Pancreas (tissue), 10 donors: ENCODE measurements at regions of chr1 and their contacts with region 1.

Region 1: DNA sequence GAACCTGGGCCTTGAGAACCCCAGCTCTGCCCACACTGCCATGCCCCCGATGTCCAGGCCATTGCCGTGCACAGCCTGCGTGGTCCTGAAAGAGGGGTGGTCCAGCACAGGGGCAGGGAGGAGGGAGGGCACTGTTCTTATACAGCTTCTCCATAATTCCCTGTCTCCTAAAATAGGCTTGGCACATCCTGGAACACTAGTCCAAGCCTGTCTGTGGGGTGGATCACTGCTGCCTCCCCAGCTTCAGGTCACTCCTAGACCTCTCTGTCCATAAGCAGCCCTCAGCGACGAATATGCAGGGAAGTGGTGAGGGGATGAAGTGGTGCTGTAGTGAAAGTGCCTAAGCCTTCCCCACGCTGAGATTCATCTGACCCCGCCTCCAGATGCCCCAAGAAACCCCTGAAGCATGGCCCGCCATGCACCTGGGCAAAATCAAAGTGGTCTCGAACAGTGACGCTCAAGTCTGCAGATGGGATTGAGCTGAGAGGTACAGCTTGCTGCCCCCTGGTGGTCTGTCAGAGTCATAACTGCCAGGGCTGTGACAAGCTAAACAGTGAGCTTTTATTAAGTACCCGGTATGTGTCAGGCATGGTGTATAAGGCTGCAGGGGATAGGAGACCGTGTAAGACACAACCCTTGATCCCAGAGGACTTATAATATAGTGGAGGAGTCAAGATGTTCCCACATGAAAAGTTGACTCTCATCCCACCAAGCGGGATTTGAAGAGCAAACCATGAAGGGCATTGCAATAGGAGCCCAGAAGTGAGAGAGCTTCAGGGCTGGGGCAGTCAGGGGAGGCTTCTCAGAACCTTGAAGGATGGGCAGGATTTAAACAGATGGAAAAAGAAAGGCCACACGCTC is 66.6 kb downstream of the FAM163A start:
- DNase-seq: peak in 5 of 6 donors; percentile 19 to 72 (median 54)
- ATAC-seq: peak; percentile 44 to 82 (median 78)
- H3K4me3 ChIP-seq: no peak overlapping the region
- H3K27ac ChIP-seq: no peak overlapping the region
- H3K4me1 ChIP-seq: no peaks in the 10 kb centered on the region
- H3K27me3 ChIP-seq: no peaks in the 10 kb centered on the region
- CTCF ChIP-seq: peak; percentile 69 to 88 (median 78)

Region 2: DNA sequence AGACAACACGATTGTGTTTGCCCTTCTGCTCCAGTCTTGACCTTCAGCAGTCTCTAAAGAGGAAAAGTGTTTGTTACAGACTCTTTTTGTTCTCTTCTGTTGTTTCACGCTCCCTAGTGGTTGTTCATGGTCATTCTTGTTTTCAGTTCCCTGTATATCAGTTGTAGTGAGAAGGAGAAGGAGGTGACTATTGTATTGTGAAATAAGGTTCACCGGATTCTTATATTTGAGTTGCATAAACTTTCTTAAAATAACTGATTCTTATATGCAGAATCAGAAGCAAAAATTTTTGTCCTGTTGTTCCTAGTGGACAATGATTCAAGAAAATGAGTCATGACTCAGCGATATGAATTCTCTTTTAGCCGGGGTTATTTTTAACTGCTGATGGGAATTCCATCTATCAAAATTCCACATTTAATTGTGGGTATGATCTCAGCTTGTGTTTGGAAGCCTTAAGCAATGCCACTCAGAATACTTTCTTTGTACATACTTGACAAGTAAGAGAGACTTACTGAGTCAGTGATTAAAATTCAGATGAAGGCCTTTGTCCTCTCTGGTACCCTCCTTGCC is 1465.1 kb before region 1 on chr1:
- intact Hi-C with region 1: no loop called
- DNase-seq: no peak
- ATAC-seq: peak; percentile 49 to 85 (median 83)
- H3K4me3 ChIP-seq: no peak overlapping the region
- H3K27ac ChIP-seq: peak overlapping the region in 2 of 4 donors; percentile 18 to 48
- H3K4me1 ChIP-seq: peaks cover 4 to 9% (median 5%) of the 10 kb centered on the region in 3 donors
- H3K27me3 ChIP-seq: no peaks in the 10 kb centered on the region
- CTCF ChIP-seq: peak in 2 of 4 donors; percentile 32 to 40

Region 3: DNA sequence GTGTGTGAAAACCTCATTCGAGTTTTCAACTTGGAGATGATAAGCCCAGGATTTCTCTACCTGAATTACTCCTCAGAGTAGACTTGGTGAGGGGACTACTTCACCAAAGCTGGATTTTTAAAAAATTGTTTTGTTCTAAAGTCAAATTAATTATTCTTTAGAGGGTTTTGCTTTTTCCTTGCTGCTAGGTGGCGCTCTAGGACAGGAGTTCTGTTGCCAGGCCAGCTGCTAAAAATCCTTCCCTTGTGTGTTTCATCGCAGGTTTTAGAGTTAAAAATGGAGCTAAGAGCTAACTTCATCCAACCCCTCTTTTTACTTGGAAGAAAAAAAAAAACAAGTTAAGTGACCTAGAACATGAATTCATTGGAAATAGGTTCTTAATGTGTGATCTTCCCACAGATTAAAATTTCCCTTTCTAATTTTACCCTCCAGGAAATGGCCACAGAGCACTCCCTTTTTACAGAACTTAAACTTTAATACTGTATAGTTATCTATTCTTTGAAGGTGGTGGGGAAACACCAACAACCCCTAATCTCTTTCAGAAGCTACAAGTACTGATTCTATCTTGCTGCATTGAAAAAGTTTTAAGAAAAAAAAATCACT is 103.3 kb before region 1 on chr1:
- intact Hi-C with region 1: loop called (anchors 2 to 10 kb)
- DNase-seq: peak in 3 of 6 donors; percentile 22 to 55 (median 31)
- ATAC-seq: peak in 3 of 4 donors; percentile 55 to 63 (median 60)
- H3K4me3 ChIP-seq: no peak overlapping the region
- H3K27ac ChIP-seq: no peak overlapping the region
- H3K4me1 ChIP-seq: peaks cover 0 to 3% (median 0%) of the 10 kb centered on the region in 3 donors
- H3K27me3 ChIP-seq: no peaks in the 10 kb centered on the region
- CTCF ChIP-seq: peak in 3 of 4 donors; percentile 42 to 48 (median 47)

Region 4: GRCh38 chr1:180003026-180003695 is 193.4 kb after region 1 on chr1:
- intact Hi-C with region 1: no loop called
- DNase-seq: no peak
- ATAC-seq: no peak
- H3K4me3 ChIP-seq: no peak overlapping the region
- H3K27ac ChIP-seq: no peak overlapping the region
- H3K4me1 ChIP-seq: peaks cover 0 to 5% (median 0%) of the 10 kb centered on the region in 3 donors
- H3K27me3 ChIP-seq: no peaks in the 10 kb centered on the region
- CTCF ChIP-seq: no peak